PC-9 (cell line): ENCODE measurements at regions of chr12 and their contacts with region 1.

Region 1: DNA sequence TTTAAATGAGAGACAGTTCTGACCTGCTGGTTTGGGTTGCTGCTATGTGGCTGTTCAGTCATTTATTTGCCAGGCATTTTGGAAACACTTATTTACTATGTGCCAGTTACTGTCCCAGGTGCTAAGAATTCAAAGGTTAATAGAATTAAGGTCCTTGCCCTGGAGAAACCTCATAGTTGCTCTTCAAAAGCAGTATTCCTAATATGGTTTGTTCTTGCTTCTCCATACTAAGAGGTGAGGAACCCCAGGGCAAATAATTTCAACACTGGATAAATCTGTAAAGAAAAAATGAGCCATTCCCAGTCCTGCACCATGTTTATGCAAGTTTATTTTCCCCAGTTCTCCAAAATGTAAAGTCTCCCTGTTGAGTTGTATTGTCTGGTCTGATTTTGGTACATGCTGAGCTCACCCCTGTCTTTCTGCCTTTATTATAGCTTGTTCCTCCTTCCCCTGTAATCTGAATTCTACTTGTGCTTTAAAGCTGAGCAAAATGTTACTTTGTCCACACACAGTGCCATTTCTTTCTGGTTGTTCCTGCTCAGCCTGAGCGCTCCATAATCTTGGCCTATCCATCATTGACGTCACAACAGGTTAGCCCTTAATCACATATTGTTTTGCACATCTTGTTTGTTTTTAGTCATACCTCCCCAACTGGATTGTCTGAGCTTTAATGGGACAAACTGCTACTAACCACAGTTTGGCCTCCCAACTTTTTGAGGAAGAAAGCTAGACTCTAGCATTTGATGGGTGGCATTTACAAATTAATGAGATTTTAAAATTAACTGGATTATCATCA is 56.7 kb downstream of the SRGAP1 start:
- DNase-seq: peak in 1 of 2 experiments; percentile 92
- H3K4me3 ChIP-seq: peak overlapping the region; percentile 9; the same call in 1 of the 2 replicates
- H3K27ac ChIP-seq: peak overlapping the region; percentile 81
- H3K4me1 ChIP-seq: peaks cover 77% of the 10 kb centered on the region
- H3K27me3 ChIP-seq: no peaks in the 10 kb centered on the region
- CTCF ChIP-seq: no peak

Region 2: DNA sequence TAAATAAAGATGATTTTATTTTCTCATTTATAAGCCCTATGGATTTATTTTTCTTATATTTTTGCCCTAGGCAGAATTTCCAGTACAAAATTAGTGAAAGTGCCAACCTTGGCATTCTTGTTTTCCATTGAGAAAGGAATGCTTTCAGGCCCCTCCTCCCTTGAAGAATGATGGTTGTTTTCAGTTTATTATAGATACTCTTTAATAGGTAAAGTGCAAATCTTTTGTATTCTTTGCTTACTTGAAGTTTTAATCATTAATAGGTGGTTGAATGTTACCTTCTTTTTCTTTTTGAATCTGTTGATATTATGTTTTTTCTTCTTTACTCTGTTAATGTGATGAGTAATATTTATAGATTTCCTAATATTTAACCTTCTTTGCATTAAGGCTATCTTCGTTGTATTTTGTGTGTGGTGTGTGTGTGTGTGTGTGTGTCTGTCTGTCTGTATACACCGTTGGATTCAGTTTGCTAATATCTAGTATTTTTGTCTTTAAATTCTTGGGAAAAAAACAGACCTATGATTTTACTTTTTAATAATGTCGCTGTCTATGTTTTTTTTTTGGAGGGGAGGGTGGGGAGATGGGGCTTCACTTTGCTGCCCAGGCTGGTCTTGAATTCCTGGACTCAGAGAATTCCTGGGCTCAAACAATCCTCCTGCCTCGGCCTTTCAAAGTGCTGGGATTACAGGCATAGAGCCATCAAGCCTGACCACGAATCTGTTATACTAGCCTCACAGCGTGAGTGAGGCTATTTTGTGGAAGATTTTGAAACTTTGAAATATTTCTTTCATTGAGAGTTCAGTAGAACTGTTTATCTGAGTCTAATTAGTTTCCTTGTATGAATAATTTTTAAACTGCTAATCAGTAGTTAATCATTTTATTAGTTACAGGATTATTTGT is 43.2 kb before region 1 on chr12:
- CTCF ChIA-PET with region 1: no interaction called
- POLR2A ChIA-PET with region 1: no interaction called
- intact Hi-C with region 1: no loop called
- DNase-seq: no peak
- H3K4me3 ChIP-seq: no peak overlapping the region
- H3K27ac ChIP-seq: peak overlapping the region; percentile 24
- H3K4me1 ChIP-seq: peaks cover 51% of the 10 kb centered on the region
- H3K27me3 ChIP-seq: no peaks in the 10 kb centered on the region
- CTCF ChIP-seq: no peak

Region 3: GRCh38 chr12:63876980-63877379 is 24.2 kb before region 1 on chr12:
- CTCF ChIA-PET with region 1: no interaction called
- POLR2A ChIA-PET with region 1: interaction called, 5 read pairs
- intact Hi-C with region 1: loop called (anchors 1 kb)
- DNase-seq: no peak
- H3K4me3 ChIP-seq: no peak overlapping the region
- H3K27ac ChIP-seq: peak overlapping the region; percentile 76
- H3K4me1 ChIP-seq: peaks cover 39% of the 10 kb centered on the region
- H3K27me3 ChIP-seq: no peaks in the 10 kb centered on the region
- CTCF ChIP-seq: no peak